Activated naive CD4-positive, alpha-beta T cell treated with anti-CD3 and anti-CD28 coated beads for 36 hours (primary cell): ENCODE measurements at regions of chr5 and their contacts with region 1.

Region 1: GRCh38 chr5:96807075-96807654 is 580 bp downstream of the ERAP1 start:
- DNase-seq: peak; percentile 48
- H3K4me3 Mint-ChIP-seq: peak overlapping the region; percentile 86
- H3K27ac Mint-ChIP-seq: peak overlapping the region; percentile 97
- H3K4me1 Mint-ChIP-seq: peaks cover 80% of the 10 kb centered on the region
- H3K27me3 Mint-ChIP-seq: no peaks in the 10 kb centered on the region

Region 2: GRCh38 chr5:95864944-95865504 is 942.1 kb before region 1 on chr5:
- CTCF ChIA-PET with region 1: no interaction called
- intact Hi-C with region 1: loop called (anchors 5 kb)
- DNase-seq: no peak
- H3K4me3 Mint-ChIP-seq: no peak overlapping the region
- H3K27ac Mint-ChIP-seq: no peak overlapping the region
- H3K4me1 Mint-ChIP-seq: peaks cover 67% of the 10 kb centered on the region
- H3K27me3 Mint-ChIP-seq: no peaks in the 10 kb centered on the region

Region 3: DNA sequence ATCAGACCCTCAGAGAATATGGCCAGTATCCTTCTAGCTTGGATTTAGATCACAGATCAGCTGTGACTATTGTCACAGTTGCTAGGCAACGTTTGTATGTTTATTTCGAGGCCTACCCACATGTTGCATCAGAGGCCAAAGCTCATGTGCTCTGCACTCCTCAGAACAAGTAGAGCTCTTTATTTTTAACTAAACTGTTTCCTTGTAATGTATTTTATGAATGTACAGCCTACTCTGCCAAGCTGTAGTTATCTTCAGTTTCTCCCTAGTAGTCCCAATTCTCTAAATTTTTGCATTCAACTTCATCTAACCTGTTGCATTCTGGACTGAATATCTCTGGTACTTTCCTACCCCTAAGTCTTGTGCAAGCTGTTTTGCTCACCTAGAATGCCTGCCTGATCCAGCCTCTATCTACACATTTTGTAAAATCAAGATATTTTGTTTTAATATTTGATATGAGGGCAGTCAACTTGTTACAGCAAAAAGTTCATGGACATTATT is 92.2 kb before region 1 on chr5:
- CTCF ChIA-PET with region 1: no interaction called
- intact Hi-C with region 1: no loop called
- DNase-seq: peak; percentile 48
- H3K4me3 Mint-ChIP-seq: no peak overlapping the region
- H3K27ac Mint-ChIP-seq: no peak overlapping the region
- H3K4me1 Mint-ChIP-seq: peaks cover 20% of the 10 kb centered on the region
- H3K27me3 Mint-ChIP-seq: no peaks in the 10 kb centered on the region

Region 4: DNA sequence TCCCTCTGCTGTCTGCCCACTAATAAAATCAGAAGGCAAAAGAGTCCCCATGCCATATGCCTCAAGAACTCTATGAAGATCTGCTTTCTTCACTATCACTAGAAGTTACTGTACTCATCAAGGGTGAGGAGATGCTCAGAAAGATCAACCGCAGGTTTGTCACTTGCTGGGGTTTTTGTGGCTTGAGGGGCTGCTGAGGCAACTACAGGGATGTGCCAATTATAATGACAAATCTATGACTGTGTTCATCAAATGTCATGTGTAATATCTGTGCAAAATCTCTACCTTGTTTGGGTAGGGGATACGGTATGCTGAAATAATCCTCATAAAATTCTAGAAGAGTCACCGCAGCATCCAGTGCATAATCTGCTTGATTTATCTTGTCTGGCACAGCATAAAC is 12.4 kb before region 1 on chr5:
- CTCF ChIA-PET with region 1: interaction called, 3 read pairs
- intact Hi-C with region 1: loop called (anchors 1 kb)
- DNase-seq: peak; percentile 84
- H3K4me3 Mint-ChIP-seq: no peak overlapping the region
- H3K27ac Mint-ChIP-seq: peak overlapping the region; percentile 67
- H3K4me1 Mint-ChIP-seq: peaks cover 42% of the 10 kb centered on the region
- H3K27me3 Mint-ChIP-seq: no peaks in the 10 kb centered on the region

Region 5: GRCh38 chr5:96823900-96824351 is 16.8 kb after region 1 on chr5:
- CTCF ChIA-PET with region 1: interaction called, 10 read pairs
- intact Hi-C with region 1: no loop called
- DNase-seq: peak; percentile 20
- H3K4me3 Mint-ChIP-seq: no peak overlapping the region
- H3K27ac Mint-ChIP-seq: no peak overlapping the region
- H3K4me1 Mint-ChIP-seq: peaks cover 40% of the 10 kb centered on the region
- H3K27me3 Mint-ChIP-seq: no peaks in the 10 kb centered on the region

Region 6: GRCh38 chr5:96861076-96861475 is 53.9 kb after region 1 on chr5:
- CTCF ChIA-PET with region 1: interaction called, 4 read pairs
- intact Hi-C with region 1: loop called (anchors 1 kb)
- DNase-seq: no peak
- H3K4me3 Mint-ChIP-seq: no peak overlapping the region
- H3K27ac Mint-ChIP-seq: no peak overlapping the region
- H3K4me1 Mint-ChIP-seq: peaks cover 28% of the 10 kb centered on the region
- H3K27me3 Mint-ChIP-seq: peaks cover 2% of the 10 kb centered on the region

Region 7: GRCh38 chr5:96957254-96958049 is 150.3 kb after region 1 on chr5:
- CTCF ChIA-PET with region 1: no interaction called
- intact Hi-C with region 1: loop called (anchors 5 kb)
- DNase-seq: peak; percentile 73
- H3K4me3 Mint-ChIP-seq: peak overlapping the region; percentile 64
- H3K27ac Mint-ChIP-seq: peak overlapping the region; percentile 86
- H3K4me1 Mint-ChIP-seq: peaks cover 77% of the 10 kb centered on the region
- H3K27me3 Mint-ChIP-seq: no peaks in the 10 kb centered on the region

Region 8: DNA sequence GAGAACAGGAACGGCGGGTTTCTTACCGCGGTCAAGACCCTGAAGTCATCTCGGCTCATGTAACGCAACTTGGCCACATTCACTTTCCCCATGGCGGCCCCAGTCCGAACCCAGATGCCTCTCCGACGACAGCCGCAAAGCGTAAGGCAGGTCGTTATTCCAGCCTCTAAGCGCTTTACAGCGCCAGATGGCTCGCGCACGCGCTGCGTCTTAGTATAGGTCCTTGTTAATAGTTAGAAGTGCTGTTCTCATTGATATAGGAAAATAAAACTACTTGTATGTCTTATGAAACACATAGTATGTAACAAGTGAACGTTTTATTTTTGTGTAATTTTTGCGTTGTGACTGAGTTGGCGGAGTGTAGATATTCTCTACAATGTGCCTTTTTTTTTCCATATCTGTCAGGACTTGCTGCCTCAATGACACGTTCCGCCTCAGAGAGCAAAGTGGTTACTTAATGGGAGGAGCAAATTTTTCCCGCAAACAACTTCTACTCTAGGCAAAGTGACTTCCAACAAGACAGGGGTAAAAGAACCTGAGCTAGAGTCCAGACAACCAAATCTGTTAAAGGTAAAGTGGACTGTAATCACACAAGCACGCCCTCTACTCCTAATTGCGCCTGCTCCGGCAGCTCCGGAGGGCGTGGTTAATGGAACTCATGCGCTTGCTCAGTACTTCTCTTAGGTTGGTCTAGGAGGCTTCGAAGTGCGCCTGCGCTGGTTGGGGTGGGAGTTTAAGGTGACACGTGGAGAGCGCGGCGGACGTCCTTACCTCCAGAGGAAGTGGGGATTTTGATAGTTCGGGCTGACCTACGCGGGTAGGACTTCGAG is 376.1 kb after region 1 on chr5 and contains the start of gene RIOK2:
- CTCF ChIA-PET with region 1: no interaction called
- intact Hi-C with region 1: loop called (anchors 2 kb)
- DNase-seq: peak; percentile 97
- H3K4me3 Mint-ChIP-seq: peak within 1 kb of the TSS; percentile 93
- H3K27ac Mint-ChIP-seq: peak within 1 kb of the TSS; percentile 99
- H3K4me1 Mint-ChIP-seq: peaks cover 33% of the 10 kb centered on the region
- H3K27me3 Mint-ChIP-seq: no peaks in the 10 kb centered on the region
- total RNA-seq, gene RIOK2: 29.1 to 32.0 TPM